CD4-positive, alpha-beta T cell (primary cell): ENCODE measurements at regions of chr10 and their contacts with region 1.

Region 1: GRCh38 chr10:94279835-94280709 is 82.7 kb downstream of the NOC3L start:
- DNase-seq: peak; percentile 15 to 71 (median 37)
- ATAC-seq: no peak
- H3K4me3 ChIP-seq: no peak overlapping the region
- H3K4me3 Mint-ChIP-seq: no peak overlapping the region
- H3K27ac ChIP-seq: no peak overlapping the region
- H3K27ac Mint-ChIP-seq: no peak overlapping the region
- H3K4me1 ChIP-seq: no peaks in the 10 kb centered on the region
- H3K4me1 Mint-ChIP-seq: no peaks in the 10 kb centered on the region
- H3K27me3 ChIP-seq: peaks cover 0 to 5% of the 10 kb centered on the region in 2 experiments
- H3K27me3 Mint-ChIP-seq: peaks cover 31% of the 10 kb centered on the region
- CTCF ChIP-seq: peak; percentile 84

Region 2: GRCh38 chr10:94155722-94156271 is 124.3 kb before region 1 on chr10:
- CTCF ChIA-PET with region 1: no interaction called
- POLR2A ChIA-PET with region 1: no interaction called
- intact Hi-C with region 1: no loop called
- DNase-seq: no peak
- ATAC-seq: no peak
- H3K4me3 ChIP-seq: no peak overlapping the region
- H3K4me3 Mint-ChIP-seq: no peak overlapping the region
- H3K27ac ChIP-seq: no peak overlapping the region
- H3K27ac Mint-ChIP-seq: no peak overlapping the region
- H3K4me1 ChIP-seq: no peaks in the 10 kb centered on the region
- H3K4me1 Mint-ChIP-seq: no peaks in the 10 kb centered on the region
- H3K27me3 ChIP-seq: no peaks in the 10 kb centered on the region
- H3K27me3 Mint-ChIP-seq: no peaks in the 10 kb centered on the region
- CTCF ChIP-seq: no peak

Region 3: DNA sequence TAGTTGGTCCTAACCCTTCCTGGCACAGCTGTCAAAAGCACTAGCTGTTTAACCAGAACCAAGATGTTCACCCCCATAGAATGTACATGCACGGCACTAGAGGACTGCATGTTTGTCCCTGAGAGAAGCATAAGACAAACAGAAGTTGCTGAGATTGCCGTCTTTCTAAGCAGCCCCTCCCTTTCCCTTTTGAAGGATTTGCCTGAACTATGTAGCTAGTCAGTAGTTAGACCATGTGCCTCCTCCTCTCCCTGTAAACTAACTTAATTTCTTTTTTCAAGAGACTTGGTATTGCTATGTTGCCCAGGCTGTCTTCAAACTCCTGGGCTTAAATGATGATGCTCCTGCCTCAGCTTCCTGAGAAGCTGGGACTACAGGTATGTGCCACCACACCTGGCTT is 163.0 kb after region 1 on chr10:
- CTCF ChIA-PET with region 1: no interaction called
- POLR2A ChIA-PET with region 1: no interaction called
- intact Hi-C with region 1: loop called in 1 of 2 experiments (anchors 2 kb)
- DNase-seq: no peak
- ATAC-seq: no peak
- H3K4me3 ChIP-seq: no peak overlapping the region
- H3K4me3 Mint-ChIP-seq: no peak overlapping the region
- H3K27ac ChIP-seq: no peak overlapping the region
- H3K27ac Mint-ChIP-seq: no peak overlapping the region
- H3K4me1 ChIP-seq: no peaks in the 10 kb centered on the region
- H3K4me1 Mint-ChIP-seq: no peaks in the 10 kb centered on the region
- H3K27me3 ChIP-seq: no peaks in the 10 kb centered on the region
- H3K27me3 Mint-ChIP-seq: peaks cover 23% of the 10 kb centered on the region
- CTCF ChIP-seq: no peak